ENCODE measurements at regions of chr7 and their contacts with region 1.

Region 1: DNA sequence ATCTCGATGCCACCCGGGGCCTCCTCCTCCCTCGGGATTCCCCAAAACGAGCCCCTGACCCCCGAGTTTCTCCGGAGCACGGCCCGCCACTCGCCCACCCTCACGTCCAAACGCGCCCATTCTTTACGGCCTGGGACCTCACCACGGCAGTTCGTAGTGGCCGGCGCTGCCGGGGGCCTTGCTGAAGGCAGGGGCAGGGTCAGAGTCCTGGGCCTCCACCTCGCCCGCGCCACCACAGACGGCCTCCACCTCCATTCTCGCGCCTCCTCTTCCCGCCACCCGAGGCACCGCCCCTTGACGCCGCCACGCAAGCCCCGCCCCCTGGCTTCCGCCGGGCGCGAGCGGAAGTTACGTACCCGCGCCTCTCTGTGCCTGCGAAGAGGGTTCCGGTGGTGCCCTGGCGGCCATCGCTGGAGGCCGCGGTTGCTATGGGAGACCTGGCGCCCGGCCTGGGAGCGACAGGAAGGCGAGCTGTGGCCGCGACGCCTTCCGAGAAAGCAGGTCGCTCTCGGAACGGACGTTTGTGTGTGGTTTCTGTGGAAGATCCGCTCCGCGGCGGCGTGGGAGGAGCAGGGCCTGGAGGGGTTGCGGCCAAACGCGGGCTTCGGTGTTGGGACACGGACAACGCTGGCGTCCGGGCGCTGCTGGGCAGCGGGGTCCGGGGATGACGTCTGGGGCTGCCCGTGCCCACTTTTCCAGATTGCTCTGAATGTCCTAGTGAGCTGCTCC is at the start of gene RFC2:
- DNase-seq: peak; percentile 95 to 99
- H3K4me3 ChIP-seq: peak within 1 kb of the TSS; percentile 98
- H3K4me3 Mint-ChIP-seq: peak within 1 kb of the TSS; percentile 97
- H3K27ac Mint-ChIP-seq: peak within 1 kb of the TSS; percentile 97
- H3K4me1 ChIP-seq: peaks cover 7% of the 10 kb centered on the region; the same call in 1 of the 2 replicates
- H3K4me1 Mint-ChIP-seq: peaks cover 7% of the 10 kb centered on the region
- H3K27me3 ChIP-seq: no peaks in the 10 kb centered on the region
- H3K27me3 Mint-ChIP-seq: no peaks in the 10 kb centered on the region
- CTCF ChIP-seq: peak in 1 of 2 experiments; percentile 41
- total RNA-seq, gene RFC2: 64.9 and 75.6 TPM in 2 replicates

Region 2: DNA sequence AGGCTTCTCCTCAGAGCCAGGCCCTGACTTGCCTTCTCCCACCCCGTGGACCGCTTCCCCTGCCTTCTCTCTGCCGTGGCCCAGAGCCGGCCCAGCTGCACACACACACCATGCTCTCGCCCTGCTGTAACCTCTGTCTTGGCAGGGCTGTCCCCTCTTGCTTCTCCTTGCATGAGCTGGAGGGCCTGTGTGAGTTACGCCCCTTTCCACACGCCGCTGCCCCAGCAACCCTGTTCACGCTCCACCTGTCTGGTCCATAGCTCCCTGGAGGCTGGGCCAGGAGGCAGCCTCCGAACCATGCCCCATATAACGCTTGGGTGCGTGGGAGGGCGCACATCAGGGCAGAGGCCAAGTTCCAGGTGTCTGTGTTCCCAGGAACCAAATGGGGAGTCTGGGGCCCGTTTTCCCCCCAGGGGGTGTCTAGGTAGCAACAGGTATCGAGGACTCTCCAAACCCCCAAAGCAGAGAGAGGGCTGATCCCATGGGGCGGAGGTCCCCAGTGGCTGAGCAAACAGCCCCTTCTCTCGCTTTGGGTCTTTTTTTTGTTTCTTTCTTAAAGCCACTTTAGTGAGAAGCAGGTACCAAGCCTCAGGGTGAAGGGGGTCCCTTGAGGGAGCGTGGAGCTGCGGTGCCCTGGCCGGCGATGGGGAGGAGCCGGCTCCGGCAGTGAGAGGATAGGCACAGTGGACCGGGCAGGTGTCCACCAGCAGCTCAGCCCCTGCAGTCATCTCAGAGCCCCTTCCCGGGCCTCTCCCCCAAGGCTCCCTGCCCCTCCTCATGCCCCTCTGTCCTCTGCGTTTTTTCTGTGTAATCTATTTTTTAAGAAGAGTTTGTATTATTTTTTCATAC is 132.7 kb before region 1 on chr7:
- CTCF ChIA-PET with region 1: no interaction called
- POLR2A ChIA-PET with region 1: no interaction called
- intact Hi-C with region 1: no loop called
- DNase-seq: no peak
- H3K4me3 ChIP-seq: no peak overlapping the region
- H3K4me3 Mint-ChIP-seq: no peak overlapping the region
- H3K27ac Mint-ChIP-seq: no peak overlapping the region
- H3K4me1 ChIP-seq: no peaks in the 10 kb centered on the region
- H3K4me1 Mint-ChIP-seq: no peaks in the 10 kb centered on the region
- H3K27me3 ChIP-seq: no peaks in the 10 kb centered on the region
- H3K27me3 Mint-ChIP-seq: no peaks in the 10 kb centered on the region
- CTCF ChIP-seq: no peak

Region 3: DNA sequence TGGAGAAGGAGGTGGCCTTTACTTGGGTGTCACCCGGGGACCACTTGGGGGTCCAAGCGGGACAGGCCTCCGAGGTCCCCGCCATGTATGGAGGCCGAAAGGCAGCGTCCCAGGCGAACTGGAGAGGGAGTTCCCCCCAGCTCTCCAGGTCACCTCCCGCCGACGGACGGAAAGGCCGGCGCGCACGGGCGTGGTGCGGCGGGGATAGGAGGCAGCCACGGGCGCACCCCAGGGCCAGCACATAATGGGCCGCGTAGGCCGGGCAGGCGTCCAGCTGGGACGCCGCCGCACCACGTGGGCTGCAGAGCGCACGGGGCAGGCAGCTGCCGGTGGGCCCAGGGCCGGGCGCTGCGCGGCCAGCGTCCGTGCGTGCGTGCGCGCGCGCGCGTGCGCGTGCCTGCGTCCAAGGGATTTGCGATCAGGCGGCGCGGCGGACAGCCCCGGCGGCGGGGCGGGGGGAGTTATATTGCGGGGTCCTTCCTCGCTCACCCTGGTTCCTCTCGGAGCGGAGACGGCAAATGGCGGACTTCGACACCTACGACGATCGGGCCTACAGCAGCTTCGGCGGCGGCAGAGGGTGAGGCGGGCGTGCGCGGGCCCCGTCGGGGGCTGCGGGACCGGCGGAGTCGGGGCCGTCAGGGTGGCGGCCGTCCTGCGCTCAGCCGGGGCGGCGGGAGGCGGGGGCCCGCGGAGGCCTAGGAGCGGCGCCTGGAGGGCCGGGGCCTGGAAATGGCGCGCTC is 80.3 kb before region 1 on chr7 and contains the start of gene EIF4H:
- CTCF ChIA-PET with region 1: no interaction called
- POLR2A ChIA-PET with region 1: no interaction called
- intact Hi-C with region 1: no loop called
- DNase-seq: peak; percentile 93 to 97
- H3K4me3 ChIP-seq: peak within 1 kb of the TSS; percentile 99
- H3K4me3 Mint-ChIP-seq: peak within 1 kb of the TSS; percentile 94
- H3K27ac Mint-ChIP-seq: peak within 1 kb of the TSS; percentile 90
- H3K4me1 ChIP-seq: peaks cover 13% of the 10 kb centered on the region; the same call in 1 of the 2 replicates
- H3K4me1 Mint-ChIP-seq: peaks cover 17% of the 10 kb centered on the region
- H3K27me3 ChIP-seq: no peaks in the 10 kb centered on the region
- H3K27me3 Mint-ChIP-seq: no peaks in the 10 kb centered on the region
- CTCF ChIP-seq: no peak
- total RNA-seq, gene EIF4H: 370 TPM in 2 replicates

Region 4: GRCh38 chr7:74220229-74220628 is 34.1 kb before region 1 on chr7:
- CTCF ChIA-PET with region 1: no interaction called
- POLR2A ChIA-PET with region 1: interaction called, 3 read pairs
- intact Hi-C with region 1: loop called (anchors 1 kb)
- DNase-seq: no peak
- H3K4me3 ChIP-seq: no peak overlapping the region
- H3K4me3 Mint-ChIP-seq: no peak overlapping the region
- H3K27ac Mint-ChIP-seq: peak overlapping the region; percentile 69
- H3K4me1 ChIP-seq: peaks cover 13% of the 10 kb centered on the region
- H3K4me1 Mint-ChIP-seq: peaks cover 13% of the 10 kb centered on the region
- H3K27me3 ChIP-seq: no peaks in the 10 kb centered on the region
- H3K27me3 Mint-ChIP-seq: no peaks in the 10 kb centered on the region
- CTCF ChIP-seq: no peak